IMR-90 (cell line): ENCODE measurements at regions of chrX and their contacts with region 1.

Region 1: GRCh38 chrX:48558271-48558670 is 16.0 kb upstream of the RBM3 start:
- DNase-seq: peak; percentile 87
- ATAC-seq: peak; percentile 91
- H3K4me3 ChIP-seq: no peak overlapping the region
- H3K27ac ChIP-seq: no peak overlapping the region
- H3K4me1 ChIP-seq: no peaks in the 10 kb centered on the region; the same call in 1 of the 2 replicates
- H3K27me3 ChIP-seq: no peaks in the 10 kb centered on the region
- CTCF ChIP-seq: no peak
- POLR2A ChIP-seq: no peak
- RAD21 ChIP-seq: no peak

Region 2: GRCh38 chrX:48539345-48540027 is 18.8 kb before region 1 on chrX and contains the start of gene TBC1D25:
- CTCF ChIA-PET with region 1: no interaction called
- POLR2A ChIA-PET with region 1: interaction called, 13 read pairs
- dilution Hi-C with region 1: no loop called
- in situ Hi-C with region 1: no loop called
- intact Hi-C with region 1: no loop called
- DNase-seq: peak; percentile 95
- ATAC-seq: peak; percentile 91
- H3K4me3 ChIP-seq: peak within 1 kb of the TSS; percentile 89
- H3K27ac ChIP-seq: peak within 1 kb of the TSS; percentile 70
- H3K4me1 ChIP-seq: no peaks in the 10 kb centered on the region
- H3K27me3 ChIP-seq: no peaks in the 10 kb centered on the region
- CTCF ChIP-seq: peak; percentile 39
- POLR2A ChIP-seq: 0 out of 2 replicates have a peak, but pooled peaks have one; percentile 38
- RAD21 ChIP-seq: peak; percentile 5; the same call in 1 of the 2 replicates
- total RNA-seq, gene TBC1D25: 8.3 and 11.3 TPM in 2 replicates

Region 3: GRCh38 chrX:49079489-49080428 is 521.5 kb after region 1 on chrX and contains the start of gene WDR45:
- CTCF ChIA-PET with region 1: no interaction called
- POLR2A ChIA-PET with region 1: no interaction called
- dilution Hi-C with region 1: no loop called
- in situ Hi-C with region 1: no loop called
- intact Hi-C with region 1: no loop called
- DNase-seq: peak; percentile 63
- ATAC-seq: peak; percentile 86
- H3K4me3 ChIP-seq: peak within 1 kb of the TSS; percentile 91
- H3K27ac ChIP-seq: peak within 1 kb of the TSS; percentile 99
- H3K4me1 ChIP-seq: peaks cover 2% of the 10 kb centered on the region; the same call in 1 of the 2 replicates
- H3K27me3 ChIP-seq: no peaks in the 10 kb centered on the region
- CTCF ChIP-seq: no peak
- POLR2A ChIP-seq: peak; percentile 60; the same call in 1 of the 2 replicates
- RAD21 ChIP-seq: no peak
- total RNA-seq, gene WDR45: 25.3 and 40.7 TPM in 2 replicates